ENCODE measurements at regions of chr4 and their contacts with region 1.

Region 1: DNA sequence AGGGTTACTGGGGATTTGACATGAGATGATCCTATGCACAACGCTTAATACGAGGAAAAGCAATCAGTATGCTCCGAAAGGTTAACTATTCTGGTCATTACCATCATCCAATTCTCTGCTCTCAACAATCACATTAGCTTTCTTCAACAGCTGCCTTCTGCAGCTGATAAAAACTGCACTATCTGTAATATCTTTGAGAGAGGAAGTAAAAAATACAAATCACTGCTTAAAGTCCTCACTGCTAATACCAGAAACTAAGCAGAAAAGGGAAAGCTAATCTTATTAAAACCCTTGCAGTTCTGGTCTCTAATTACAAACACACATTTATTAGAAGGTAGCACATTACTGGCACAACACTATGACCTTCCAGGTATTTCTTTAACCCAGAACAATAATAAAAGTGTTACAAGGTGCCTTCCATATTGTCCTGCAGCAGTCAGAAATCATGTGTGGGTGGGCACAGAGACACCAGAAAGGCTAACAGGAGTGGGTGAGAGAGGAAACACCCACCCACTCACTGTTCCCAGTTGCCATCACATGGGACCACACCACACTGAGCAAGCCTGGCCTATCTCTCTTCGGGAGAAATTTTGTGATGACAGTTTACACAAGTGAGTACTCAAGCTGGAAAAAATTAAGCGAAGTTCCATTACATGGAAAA is 71.0 kb downstream of the RELL1 start:
- DNase-seq: no peak
- H3K4me3 ChIP-seq: no peak overlapping the region
- H3K27ac ChIP-seq: no peak overlapping the region
- H3K4me1 ChIP-seq: no peaks in the 10 kb centered on the region
- H3K27me3 ChIP-seq: no peaks in the 10 kb centered on the region
- CTCF ChIP-seq: no peak
- POLR2A ChIP-seq: no peak

Region 2: GRCh38 chr4:37686373-37687193 is 71.4 kb after region 1 on chr4 and contains the start of gene RELL1:
- intact Hi-C with region 1: loop called in 1 of 2 experiments (anchors 10 kb)
- DNase-seq: peak; percentile 100
- H3K4me3 ChIP-seq: peak within 1 kb of the TSS; percentile 36 to 68 (median 67)
- H3K27ac ChIP-seq: peak within 1 kb of the TSS; percentile 30 to 95 (median 92)
- H3K4me1 ChIP-seq: peaks cover 0 to 27% of the 10 kb centered on the region in 2 donors
- H3K27me3 ChIP-seq: no peaks in the 10 kb centered on the region
- CTCF ChIP-seq: no peak
- POLR2A ChIP-seq: no peak
- total RNA-seq, gene RELL1: 6.3 to 27.0 (median 16.9) TPM